ENCODE measurements at regions of chr5 and their contacts with region 1.

Region 1: DNA sequence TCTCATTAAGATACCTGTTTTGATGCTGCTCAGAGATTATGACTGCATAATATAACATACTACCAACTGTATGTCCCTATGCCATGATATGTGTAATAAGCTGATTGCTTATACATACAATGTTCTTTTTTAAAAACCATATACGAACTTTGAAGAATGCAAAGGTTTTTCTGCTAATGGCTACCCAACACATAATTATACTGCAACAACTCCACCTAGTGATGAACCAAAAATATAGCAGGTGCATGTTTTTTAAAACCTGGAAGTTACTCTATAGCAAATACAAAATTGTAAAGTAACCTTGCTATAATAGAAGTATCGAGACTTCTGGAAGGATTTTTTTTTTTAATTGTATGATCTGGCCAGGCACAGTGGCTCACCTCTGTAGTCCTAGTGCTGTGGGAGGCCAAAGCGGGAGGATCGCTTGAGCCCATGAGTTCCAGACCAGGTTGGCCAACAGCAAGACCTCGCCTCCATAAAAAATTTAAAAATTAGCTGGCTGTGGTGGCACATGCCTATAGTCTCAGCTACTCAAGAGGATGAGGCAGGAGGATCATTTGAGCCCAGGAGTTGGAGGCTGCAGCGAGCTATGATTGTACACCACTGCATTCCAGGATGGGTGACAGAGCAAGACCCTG is 49.1 kb downstream of the HOMER1 start:
- DNase-seq: peak; percentile 43

Region 2: DNA sequence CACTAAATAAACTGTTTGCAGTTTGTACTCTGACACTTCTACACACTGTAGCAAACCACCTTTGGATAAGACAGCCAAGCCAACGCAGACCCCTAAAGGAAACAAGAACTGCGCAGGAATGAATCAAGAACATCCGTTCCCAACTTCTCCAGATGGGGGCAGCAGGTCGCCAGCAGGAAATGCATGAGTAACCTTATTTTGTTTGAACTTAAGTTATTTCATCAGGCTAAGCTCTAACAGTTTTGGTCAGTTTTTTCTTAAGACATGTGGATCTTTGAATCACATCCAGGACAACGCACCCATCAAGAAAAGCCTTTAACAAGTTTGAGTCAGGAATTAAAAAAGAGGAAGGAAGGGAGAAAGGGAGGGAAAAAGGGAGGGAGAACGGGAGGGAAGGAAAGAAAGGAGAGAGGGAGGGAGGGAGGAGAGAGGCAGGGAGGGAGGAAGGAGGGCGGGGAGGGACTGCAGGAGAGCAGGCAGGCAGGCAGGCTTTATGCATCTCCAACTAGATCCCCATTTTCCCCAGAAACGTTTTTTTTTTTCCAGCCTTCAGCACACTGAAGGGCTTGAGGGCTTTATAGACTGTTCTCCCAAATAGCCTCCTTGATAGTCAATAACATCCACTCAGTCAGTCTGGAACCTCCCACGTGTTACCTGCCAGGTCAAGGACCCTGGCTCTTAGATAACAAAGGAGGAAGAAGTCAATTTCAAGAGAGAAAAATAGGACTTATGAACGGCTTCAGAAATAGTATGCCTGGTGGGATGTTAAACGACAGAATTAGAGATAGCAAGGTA is 331.0 kb before region 1 on chr5:
- in situ Hi-C with region 1: loop called (anchors 25 kb)
- DNase-seq: peak; percentile 84

Region 3: DNA sequence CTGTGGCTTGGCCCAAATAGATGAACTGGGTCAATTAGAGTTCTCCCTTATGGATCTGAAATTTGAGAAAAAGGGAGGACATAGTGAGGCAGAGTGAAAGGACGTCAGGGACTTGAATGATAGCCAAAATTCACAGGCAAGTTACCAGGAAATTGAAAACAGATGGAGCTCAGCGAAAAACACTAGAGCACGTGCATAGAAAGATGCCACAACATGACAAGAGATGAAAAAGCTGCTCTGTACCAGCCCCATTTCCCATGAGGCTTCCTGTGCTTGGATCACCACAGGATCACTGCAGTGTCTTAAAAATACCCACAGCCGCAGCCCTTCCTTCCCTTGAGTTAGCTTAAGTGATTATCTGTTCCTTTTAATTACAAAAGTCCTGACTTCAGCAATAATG is 88.2 kb after region 1 on chr5:
- in situ Hi-C with region 1: no loop called
- DNase-seq: peak; percentile 33